Ovary (tissue), 10 donors: ENCODE measurements at regions of chr1 and their contacts with region 1.

Region 1: DNA sequence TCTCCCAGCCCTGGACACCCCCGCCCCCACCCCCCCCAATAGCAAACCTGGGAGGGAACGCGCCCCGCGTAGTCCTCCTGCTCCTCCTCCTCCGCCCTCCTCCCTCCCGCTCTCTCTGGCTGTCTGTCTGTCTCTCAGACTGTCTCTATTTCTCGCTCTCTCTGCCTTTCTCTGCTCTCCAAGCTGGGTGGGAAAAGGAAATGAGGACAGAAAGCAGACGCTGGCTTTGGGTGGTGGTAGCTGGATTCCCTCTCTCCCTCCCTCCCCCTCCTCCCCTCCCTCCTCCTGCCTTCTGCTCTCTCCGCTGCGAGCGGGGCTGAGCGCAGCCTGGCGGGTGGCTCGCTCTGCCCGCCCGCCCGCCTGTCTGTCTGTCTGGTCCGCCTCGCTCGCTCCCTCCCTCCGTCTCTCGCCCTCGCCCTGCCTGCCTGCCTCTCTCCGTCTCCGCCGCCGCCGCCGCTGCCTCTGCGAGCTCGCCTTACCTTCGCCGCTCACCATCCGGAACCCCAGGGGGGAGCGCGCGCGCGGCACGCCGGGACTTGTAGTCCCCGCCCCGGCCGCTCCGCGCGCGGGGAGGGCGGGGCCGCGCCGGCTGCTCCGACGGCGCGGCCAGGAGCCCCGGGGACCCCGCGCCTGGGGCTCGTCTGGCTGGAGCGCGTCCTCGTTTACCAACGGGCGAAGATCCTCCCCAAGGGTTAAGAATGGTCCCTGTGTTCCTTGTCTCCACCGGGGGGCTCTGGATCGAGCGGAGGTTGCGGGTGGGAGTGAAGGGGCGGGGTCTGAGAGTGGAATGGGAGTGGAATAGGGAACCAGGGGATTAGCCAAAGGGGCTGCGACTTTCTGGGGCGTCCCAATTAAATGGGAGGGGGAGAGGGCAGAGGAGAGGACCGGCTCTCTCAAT is at the start of gene AHDC1:
- DNase-seq: peak; percentile 91 to 94 (median 93)
- H3K4me3 ChIP-seq: peak within 1 kb of the TSS; percentile 75
- H3K27ac ChIP-seq: peak within 1 kb of the TSS; percentile 86 to 92
- H3K4me1 ChIP-seq: peaks cover 12% of the 10 kb centered on the region
- H3K27me3 ChIP-seq: no peaks in the 10 kb centered on the region
- CTCF ChIP-seq: peak in 2 of 3 donors; percentile 46 to 60
- EP300 ChIP-seq: no peak
- POLR2A ChIP-seq: peak; percentile 94
- total RNA-seq, gene AHDC1: 11.3 to 159 (median 91.2) TPM

Region 2: GRCh38 chr1:27402349-27402754 is 201.6 kb before region 1 on chr1:
- intact Hi-C with region 1: loop called in 3 of 4 experiments (anchors 5 kb)
- DNase-seq: peak; percentile 71 to 82 (median 72)
- H3K4me3 ChIP-seq: no peak overlapping the region
- H3K27ac ChIP-seq: peak overlapping the region in 1 of 2 donors; percentile 55
- H3K4me1 ChIP-seq: peaks cover 6% of the 10 kb centered on the region
- H3K27me3 ChIP-seq: no peaks in the 10 kb centered on the region
- CTCF ChIP-seq: peak in 2 of 3 donors; percentile 37 to 48
- EP300 ChIP-seq: no peak
- POLR2A ChIP-seq: no peak

Region 3: DNA sequence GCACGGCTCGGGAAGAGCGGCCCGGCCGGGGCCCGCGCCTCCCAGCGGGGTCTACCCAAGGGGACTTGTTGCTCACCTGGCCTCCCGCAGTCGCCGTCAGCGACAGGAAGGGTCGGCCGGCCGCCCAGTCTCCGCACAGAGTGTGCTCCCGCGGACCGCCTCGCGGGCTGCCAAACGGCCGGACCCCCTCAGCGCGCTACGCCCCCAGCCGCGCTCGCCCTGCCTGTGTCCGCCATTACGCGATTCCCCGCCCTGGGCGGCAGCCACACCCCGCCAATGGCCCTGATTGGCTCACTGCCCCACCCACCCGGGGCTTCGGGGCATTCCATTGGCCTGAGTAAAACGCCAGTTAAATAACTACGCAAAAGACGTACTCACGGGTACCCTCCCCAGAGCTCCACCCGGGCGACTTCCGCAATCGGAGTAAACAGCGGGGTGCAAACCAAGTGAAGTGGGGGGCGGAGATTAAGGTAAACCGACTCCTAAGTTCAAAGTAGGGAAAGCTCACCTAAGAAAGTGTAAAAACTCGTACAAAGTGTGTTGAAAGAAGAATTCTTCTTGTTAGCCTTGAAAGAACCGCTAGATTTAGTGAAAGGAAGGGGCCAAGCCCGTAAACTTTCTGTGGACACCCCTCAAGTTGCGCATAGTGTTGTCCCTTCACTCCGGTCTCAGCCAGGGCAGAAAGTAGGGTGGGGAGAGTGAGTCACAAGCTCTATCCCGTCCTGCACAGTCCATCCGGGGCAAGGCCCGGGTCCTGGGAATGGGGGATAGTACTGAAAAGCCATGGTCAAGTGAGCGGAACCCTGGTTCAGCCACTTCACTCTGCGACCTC is 113.8 kb before region 1 on chr1 and contains the start of gene WASF2:
- intact Hi-C with region 1: loop called in 2 of 4 experiments (anchors 2 to 10 kb)
- DNase-seq: peak; percentile 97 to 98 (median 98)
- H3K4me3 ChIP-seq: peak within 1 kb of the TSS; percentile 100
- H3K27ac ChIP-seq: peak within 1 kb of the TSS; percentile 95 to 99
- H3K4me1 ChIP-seq: peaks cover 8% of the 10 kb centered on the region
- H3K27me3 ChIP-seq: no peaks in the 10 kb centered on the region
- CTCF ChIP-seq: peak in 1 of 3 donors; percentile 11
- EP300 ChIP-seq: no peak
- POLR2A ChIP-seq: peak; percentile 93
- total RNA-seq, gene WASF2: 28.0 to 163 (median 153) TPM

Region 4: DNA sequence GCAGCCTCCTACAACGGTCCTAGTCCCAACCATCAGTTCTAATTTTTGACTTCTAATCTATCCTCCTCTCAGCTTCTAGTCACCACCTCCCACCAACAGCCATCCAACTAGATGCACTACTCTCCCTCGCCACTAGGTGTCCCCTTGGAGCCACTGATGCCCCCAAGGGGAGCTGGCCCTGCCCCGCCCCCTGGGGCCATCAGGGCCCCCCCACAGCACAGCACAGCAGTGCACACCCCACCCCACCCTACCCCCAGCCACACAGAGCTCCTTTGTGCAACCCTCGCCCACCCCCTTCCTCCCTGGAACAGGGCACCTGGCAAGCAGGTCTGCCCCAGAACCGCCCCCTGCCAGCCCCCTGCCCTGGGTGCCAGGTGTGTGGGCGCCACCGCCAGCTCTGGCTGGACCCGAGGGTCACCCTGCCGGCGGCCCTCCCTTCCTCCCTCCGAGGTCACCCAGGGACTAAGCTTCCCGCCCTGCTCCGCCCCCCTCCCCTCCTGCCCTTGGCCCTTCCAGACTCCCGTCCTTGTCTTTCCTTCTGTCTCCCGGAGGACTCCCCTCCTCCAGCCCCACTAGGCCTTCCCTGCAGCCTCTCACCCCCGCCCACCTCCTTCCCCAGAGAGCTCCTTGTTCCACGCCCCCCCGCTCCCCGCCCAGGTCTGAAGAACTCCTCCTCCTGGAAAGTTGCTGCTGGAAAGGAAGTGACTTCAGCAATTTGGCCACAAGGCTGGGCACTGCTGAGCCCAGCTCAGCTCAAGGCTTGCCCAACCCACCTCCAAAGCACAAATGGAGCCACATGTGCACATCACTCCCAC is 46.9 kb before region 1 on chr1:
- intact Hi-C with region 1: loop called in 3 of 4 experiments (anchors 5 kb)
- DNase-seq: peak; percentile 93 to 96 (median 96)
- H3K4me3 ChIP-seq: no peak overlapping the region
- H3K27ac ChIP-seq: peak overlapping the region; percentile 44 to 72
- H3K4me1 ChIP-seq: peaks cover 21% of the 10 kb centered on the region
- H3K27me3 ChIP-seq: no peaks in the 10 kb centered on the region
- CTCF ChIP-seq: peak; percentile 79 to 91 (median 84)
- EP300 ChIP-seq: no peak
- POLR2A ChIP-seq: no peak

Region 5: GRCh38 chr1:27662707-27663393 is 58.9 kb after region 1 on chr1:
- intact Hi-C with region 1: loop called in 3 of 4 experiments (anchors 2 to 5 kb)
- DNase-seq: peak; percentile 71 to 88 (median 86)
- H3K4me3 ChIP-seq: no peak overlapping the region
- H3K27ac ChIP-seq: no peak overlapping the region
- H3K4me1 ChIP-seq: peaks cover 8% of the 10 kb centered on the region
- H3K27me3 ChIP-seq: no peaks in the 10 kb centered on the region
- CTCF ChIP-seq: peak; percentile 88 to 96 (median 90)
- EP300 ChIP-seq: no peak
- POLR2A ChIP-seq: no peak